ENCODE measurements at regions of chr4 and their contacts with region 1.

Region 1: GRCh38 chr4:122542411-122543236 is 78.2 kb downstream of the IL21 start:
- DNase-seq: no peak
- H3K4me3 Mint-ChIP-seq: peak overlapping the region; percentile 62
- H3K27ac Mint-ChIP-seq: peak overlapping the region; percentile 97
- H3K4me1 Mint-ChIP-seq: peaks cover 93% of the 10 kb centered on the region
- H3K27me3 Mint-ChIP-seq: no peaks in the 10 kb centered on the region

Region 2: GRCh38 chr4:122476126-122476525 is 66.5 kb before region 1 on chr4:
- CTCF ChIA-PET with region 1: no interaction called
- POLR2A ChIA-PET with region 1: no interaction called
- intact Hi-C with region 1: loop called (anchors 1 kb)
- DNase-seq: no peak
- H3K4me3 Mint-ChIP-seq: no peak overlapping the region
- H3K27ac Mint-ChIP-seq: no peak overlapping the region
- H3K4me1 Mint-ChIP-seq: peaks cover 16% of the 10 kb centered on the region
- H3K27me3 Mint-ChIP-seq: no peaks in the 10 kb centered on the region

Region 3: GRCh38 chr4:122489061-122489460 is 53.6 kb before region 1 on chr4:
- CTCF ChIA-PET with region 1: no interaction called
- POLR2A ChIA-PET with region 1: no interaction called
- intact Hi-C with region 1: no loop called
- DNase-seq: no peak
- H3K4me3 Mint-ChIP-seq: no peak overlapping the region
- H3K27ac Mint-ChIP-seq: no peak overlapping the region
- H3K4me1 Mint-ChIP-seq: no peaks in the 10 kb centered on the region
- H3K27me3 Mint-ChIP-seq: no peaks in the 10 kb centered on the region

Region 4: GRCh38 chr4:122525865-122526264 is 16.8 kb before region 1 on chr4:
- CTCF ChIA-PET with region 1: no interaction called
- POLR2A ChIA-PET with region 1: no interaction called
- intact Hi-C with region 1: no loop called
- DNase-seq: no peak
- H3K4me3 Mint-ChIP-seq: no peak overlapping the region
- H3K27ac Mint-ChIP-seq: no peak overlapping the region
- H3K4me1 Mint-ChIP-seq: peaks cover 7% of the 10 kb centered on the region
- H3K27me3 Mint-ChIP-seq: no peaks in the 10 kb centered on the region

Region 5: GRCh38 chr4:122555216-122555615 is 12.6 kb after region 1 on chr4:
- CTCF ChIA-PET with region 1: interaction called, 7 read pairs
- POLR2A ChIA-PET with region 1: interaction called, 18 read pairs
- intact Hi-C with region 1: loop called (anchors 1 kb)
- DNase-seq: no peak
- H3K4me3 Mint-ChIP-seq: no peak overlapping the region
- H3K27ac Mint-ChIP-seq: peak overlapping the region; percentile 43
- H3K4me1 Mint-ChIP-seq: peaks cover 67% of the 10 kb centered on the region
- H3K27me3 Mint-ChIP-seq: no peaks in the 10 kb centered on the region

Region 6: DNA sequence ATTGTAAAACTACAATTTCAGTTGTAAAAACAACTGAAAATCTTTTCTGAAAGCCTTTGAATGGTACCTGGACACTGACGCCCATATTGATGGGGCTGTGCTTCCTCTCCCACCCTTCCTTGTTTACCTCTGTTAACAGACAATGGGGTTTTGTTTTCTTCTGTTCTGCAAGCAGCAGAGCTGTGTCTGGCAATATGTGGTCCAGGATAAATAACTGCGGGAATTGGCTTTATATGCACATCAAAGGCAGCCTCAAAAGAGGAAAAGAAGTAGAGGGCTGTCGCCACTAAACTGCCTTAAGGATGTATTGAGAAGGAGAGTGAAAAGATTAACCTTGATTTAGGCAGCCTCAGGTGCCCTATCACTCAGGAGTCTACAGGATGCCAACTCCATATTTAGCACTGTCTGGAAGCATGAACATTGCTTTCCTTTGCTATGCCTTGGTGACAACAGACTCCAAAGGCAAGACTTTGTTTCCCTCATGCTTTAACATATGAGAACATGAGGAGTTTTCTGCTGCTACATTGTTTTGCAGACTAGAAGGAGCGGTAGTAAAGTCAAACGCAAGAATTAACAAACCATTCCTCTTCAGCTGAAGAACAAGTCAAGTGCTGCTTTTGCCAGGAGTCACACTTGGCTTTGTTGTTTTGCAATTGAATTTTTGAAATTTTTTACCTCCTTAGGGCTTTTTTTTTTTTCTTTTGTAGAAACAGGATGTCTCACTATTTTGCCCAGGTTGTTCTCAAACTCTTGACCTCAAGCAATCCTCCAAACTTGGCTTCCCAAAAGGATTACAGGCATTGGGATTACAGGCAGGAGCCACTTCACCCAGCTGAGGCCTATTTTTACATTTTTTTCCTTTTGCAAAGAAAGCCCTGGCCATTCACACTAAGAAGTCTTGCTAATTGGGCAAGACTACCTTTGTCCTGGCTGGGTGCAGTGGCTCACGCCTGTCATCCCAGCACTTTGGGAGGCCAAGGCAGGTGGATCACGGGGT is 75.3 kb after region 1 on chr4:
- CTCF ChIA-PET with region 1: no interaction called
- POLR2A ChIA-PET with region 1: interaction called, 8 read pairs
- intact Hi-C with region 1: loop called (anchors 2 kb)
- DNase-seq: no peak
- H3K4me3 Mint-ChIP-seq: peak overlapping the region; percentile 76
- H3K27ac Mint-ChIP-seq: peak overlapping the region; percentile 87
- H3K4me1 Mint-ChIP-seq: peaks cover 70% of the 10 kb centered on the region
- H3K27me3 Mint-ChIP-seq: no peaks in the 10 kb centered on the region

Region 7: GRCh38 chr4:122710434-122711308 is 168.0 kb after region 1 on chr4:
- CTCF ChIA-PET with region 1: no interaction called
- POLR2A ChIA-PET with region 1: no interaction called
- intact Hi-C with region 1: loop called (anchors 1 kb)
- DNase-seq: peak; percentile 73
- H3K4me3 Mint-ChIP-seq: peak overlapping the region; percentile 60
- H3K27ac Mint-ChIP-seq: peak overlapping the region; percentile 94
- H3K4me1 Mint-ChIP-seq: peaks cover 72% of the 10 kb centered on the region
- H3K27me3 Mint-ChIP-seq: no peaks in the 10 kb centered on the region